Natural killer cell (primary cell): ENCODE measurements at regions of chr1 and their contacts with region 1.

Region 1: GRCh38 chr1:164813776-164814175 is 254.8 kb downstream of the PBX1 start:
- DNase-seq: no peak
- ATAC-seq: no peak
- H3K4me3 ChIP-seq: no peak overlapping the region
- H3K4me3 Mint-ChIP-seq: no peak overlapping the region
- H3K27ac ChIP-seq: no peak overlapping the region
- H3K27ac Mint-ChIP-seq: no peak overlapping the region
- H3K4me1 ChIP-seq: no peaks in the 10 kb centered on the region
- H3K4me1 Mint-ChIP-seq: no peaks in the 10 kb centered on the region
- H3K27me3 ChIP-seq: no peaks in the 10 kb centered on the region
- H3K27me3 Mint-ChIP-seq: peaks cover 11 to 42% of the 10 kb centered on the region in 2 donors
- CTCF ChIP-seq: no peak

Region 2: GRCh38 chr1:164876398-164877116 is 62.8 kb after region 1 on chr1:
- intact Hi-C with region 1: loop called (anchors 10 kb)
- DNase-seq: no peak
- ATAC-seq: no peak
- H3K4me3 ChIP-seq: no peak overlapping the region
- H3K4me3 Mint-ChIP-seq: no peak overlapping the region
- H3K27ac ChIP-seq: no peak overlapping the region
- H3K27ac Mint-ChIP-seq: no peak overlapping the region
- H3K4me1 ChIP-seq: no peaks in the 10 kb centered on the region
- H3K4me1 Mint-ChIP-seq: no peaks in the 10 kb centered on the region
- H3K27me3 ChIP-seq: no peaks in the 10 kb centered on the region
- H3K27me3 Mint-ChIP-seq: no peaks in the 10 kb centered on the region
- CTCF ChIP-seq: no peak